ENCODE measurements at regions of chr1 and their contacts with region 1.

Region 1: DNA sequence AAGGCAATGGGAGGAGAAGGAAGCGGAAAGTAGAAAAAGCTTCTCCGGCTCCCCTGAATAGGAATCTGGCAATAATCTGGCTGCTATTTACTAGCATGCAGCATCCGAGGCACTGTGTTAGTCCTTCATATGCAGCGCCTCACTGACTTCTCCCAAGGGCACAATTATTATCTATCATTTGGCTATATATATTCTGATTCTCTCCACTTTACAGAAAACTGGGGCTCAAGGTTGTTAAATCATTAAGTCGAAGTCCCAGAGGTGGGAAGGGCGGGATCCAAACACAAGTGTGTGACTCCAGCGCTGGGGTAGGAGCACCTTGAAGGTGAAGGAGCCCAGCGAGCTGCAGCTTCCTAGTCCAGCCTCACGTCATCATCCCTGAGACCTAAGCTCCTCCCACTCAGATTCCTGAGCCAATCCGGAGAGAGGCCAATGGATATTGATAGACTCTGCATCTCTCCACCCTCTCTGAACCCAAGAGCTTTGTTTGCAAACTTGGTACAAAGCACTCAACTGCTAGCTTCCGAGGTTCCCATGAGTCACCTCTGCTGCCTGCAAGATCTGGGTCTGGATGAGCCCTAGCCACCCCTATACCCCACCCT is 16.6 kb upstream of the EYA3 start:
- DNase-seq: no peak
- ATAC-seq: no peak
- H3K4me3 ChIP-seq: no peak overlapping the region
- H3K4me3 Mint-ChIP-seq: no peak overlapping the region
- H3K27ac ChIP-seq: no peak overlapping the region
- H3K27ac Mint-ChIP-seq: no peak overlapping the region
- H3K4me1 ChIP-seq: no peaks in the 10 kb centered on the region
- H3K4me1 Mint-ChIP-seq: no peaks in the 10 kb centered on the region
- H3K27me3 ChIP-seq: no peaks in the 10 kb centered on the region
- H3K27me3 Mint-ChIP-seq: no peaks in the 10 kb centered on the region
- CTCF ChIP-seq: no peak

Region 2: DNA sequence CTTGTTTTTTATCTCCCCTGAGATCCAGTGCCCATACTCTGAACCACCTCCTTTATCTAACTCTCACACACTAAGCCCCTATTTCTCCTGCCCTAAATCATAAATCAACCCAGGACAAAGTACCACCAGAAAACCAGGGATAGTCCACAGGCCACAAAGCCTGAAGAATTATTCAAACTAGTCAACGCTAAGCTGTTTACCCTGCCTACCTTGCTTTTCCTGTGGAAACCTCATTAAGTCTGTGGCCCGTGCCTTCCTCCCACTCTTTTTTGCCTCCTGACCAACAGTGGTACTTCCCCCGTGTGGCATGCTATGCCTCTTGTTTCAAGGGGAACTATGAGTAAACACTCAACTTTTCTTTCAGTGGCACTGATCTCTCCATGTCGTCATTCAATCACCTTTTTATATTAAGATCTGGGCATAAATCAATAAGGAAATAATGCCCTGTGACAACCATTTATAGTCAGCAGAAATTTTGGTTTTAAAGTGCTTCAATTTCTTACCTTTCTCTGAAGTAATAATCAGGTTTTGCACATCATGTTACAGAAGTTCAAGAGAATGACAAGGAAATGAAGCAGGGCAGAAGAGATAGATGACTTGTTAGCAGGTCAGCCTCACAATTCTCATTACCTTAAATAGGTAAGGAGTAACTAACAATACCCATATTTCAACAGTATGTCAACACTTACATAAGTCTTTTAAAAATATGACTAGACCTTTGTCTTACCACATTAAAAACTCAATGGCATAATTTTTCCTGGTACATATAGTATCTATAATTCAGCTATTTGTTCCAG is 48.6 kb before region 1 on chr1:
- CTCF ChIA-PET with region 1: no interaction called
- POLR2A ChIA-PET with region 1: no interaction called
- intact Hi-C with region 1: no loop called
- DNase-seq: peak in 13 of 14 experiments; percentile 2 to 77 (median 26)
- ATAC-seq: peak; percentile 90
- H3K4me3 ChIP-seq: no peak overlapping the region
- H3K4me3 Mint-ChIP-seq: no peak overlapping the region
- H3K27ac ChIP-seq: peak overlapping the region in 1 of 2 donors; percentile 25
- H3K27ac Mint-ChIP-seq: peak overlapping the region; percentile 57
- H3K4me1 ChIP-seq: peaks cover 4% of the 10 kb centered on the region
- H3K4me1 Mint-ChIP-seq: peaks cover 37% of the 10 kb centered on the region
- H3K27me3 ChIP-seq: no peaks in the 10 kb centered on the region
- H3K27me3 Mint-ChIP-seq: no peaks in the 10 kb centered on the region
- CTCF ChIP-seq: no peak

Region 3: GRCh38 chr1:28199328-28200233 is 94.6 kb after region 1 on chr1:
- CTCF ChIA-PET with region 1: no interaction called
- POLR2A ChIA-PET with region 1: no interaction called
- intact Hi-C with region 1: loop called in 1 of 2 experiments (anchors 5 kb)
- DNase-seq: peak; percentile 12 to 91 (median 42)
- ATAC-seq: peak; percentile 92
- H3K4me3 ChIP-seq: no peak overlapping the region
- H3K4me3 Mint-ChIP-seq: peak overlapping the region; percentile 78
- H3K27ac ChIP-seq: peak overlapping the region; percentile 11 to 30
- H3K27ac Mint-ChIP-seq: peak overlapping the region; percentile 67
- H3K4me1 ChIP-seq: peaks cover 46% of the 10 kb centered on the region
- H3K4me1 Mint-ChIP-seq: peaks cover 40% of the 10 kb centered on the region
- H3K27me3 ChIP-seq: no peaks in the 10 kb centered on the region
- H3K27me3 Mint-ChIP-seq: no peaks in the 10 kb centered on the region
- CTCF ChIP-seq: no peak

Measured in CD4-positive, alpha-beta T cell (primary cell).